ENCODE measurements at regions of chr5 and their contacts with region 1.

Region 1: DNA sequence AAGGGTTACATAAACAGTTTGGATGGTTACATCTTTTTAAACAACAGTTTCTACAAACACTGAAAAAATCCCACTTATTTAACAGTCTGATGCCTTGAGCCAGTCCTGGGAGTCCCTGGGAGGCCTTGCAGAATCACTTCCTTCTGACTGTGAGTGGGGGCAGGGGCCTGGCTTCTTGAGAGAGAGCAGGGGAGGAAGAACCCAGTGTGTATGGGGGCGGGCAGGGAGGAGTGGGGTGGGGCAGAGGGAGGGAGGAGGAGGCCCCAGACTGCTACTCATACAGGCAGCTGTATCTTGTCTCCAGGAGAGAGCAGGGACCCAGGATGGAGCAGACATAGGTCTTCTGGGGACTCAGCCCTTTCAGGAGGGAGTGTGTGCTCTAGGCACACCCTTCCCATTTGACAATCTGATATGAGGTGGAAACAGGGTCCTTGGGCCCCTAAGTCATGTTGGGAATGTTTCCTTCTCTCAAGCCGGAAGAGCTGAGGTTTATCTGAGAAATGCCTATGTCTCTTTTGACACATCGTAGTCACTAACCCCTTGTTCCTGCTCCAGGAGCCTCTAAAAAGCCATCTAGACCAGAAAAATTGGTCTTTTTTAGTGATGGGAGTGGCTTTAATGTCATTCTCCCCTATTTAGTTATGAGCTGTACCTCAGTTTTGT is 52.8 kb downstream of the IRF1 start:
- DNase-seq: peak; percentile 83
- H3K4me3 Mint-ChIP-seq: peak overlapping the region; percentile 46
- H3K27ac Mint-ChIP-seq: peak overlapping the region; percentile 81
- H3K4me1 Mint-ChIP-seq: peaks cover 83% of the 10 kb centered on the region
- H3K27me3 Mint-ChIP-seq: no peaks in the 10 kb centered on the region

Region 2: DNA sequence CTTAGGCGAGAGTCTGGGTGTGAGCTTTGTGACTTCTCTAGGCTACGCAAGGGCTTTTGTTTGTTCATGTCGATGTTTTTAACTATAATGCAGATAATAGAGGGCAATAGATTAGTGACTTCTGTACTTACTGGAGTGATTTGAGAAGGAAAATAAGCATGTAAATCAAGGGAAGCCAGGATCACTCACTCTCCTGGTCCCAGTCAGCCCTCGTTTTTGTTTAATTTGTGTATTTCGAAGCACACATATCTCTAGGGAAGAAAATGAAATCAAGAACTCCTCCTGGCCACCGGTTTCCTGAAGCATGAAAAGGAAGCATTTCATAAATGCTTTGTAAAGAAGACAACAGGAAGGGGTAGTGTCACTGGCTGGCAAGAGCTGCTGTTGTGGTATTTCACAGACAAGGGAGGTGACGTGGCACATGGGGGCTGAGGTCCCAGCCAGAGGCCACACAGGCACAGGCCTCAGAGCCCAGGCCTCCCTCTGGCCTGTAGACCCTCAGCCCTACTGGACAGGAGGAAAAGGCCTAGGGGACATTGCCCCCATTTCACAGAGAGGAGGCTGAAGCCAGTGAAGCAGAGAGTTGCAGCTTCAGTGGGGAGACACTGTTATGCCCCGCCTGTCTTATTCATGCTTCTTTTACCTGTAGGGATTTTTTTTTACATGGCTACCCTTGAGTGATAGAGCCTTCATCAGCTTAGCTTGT is 18.7 kb after region 1 on chr5:
- CTCF ChIA-PET with region 1: interaction called, 6 read pairs
- intact Hi-C with region 1: loop called (anchors 1 kb)
- DNase-seq: peak; percentile 66
- H3K4me3 Mint-ChIP-seq: peak overlapping the region; percentile 0
- H3K27ac Mint-ChIP-seq: peak overlapping the region; percentile 83
- H3K4me1 Mint-ChIP-seq: peaks cover 84% of the 10 kb centered on the region
- H3K27me3 Mint-ChIP-seq: no peaks in the 10 kb centered on the region

Measured in activated naive CD4-positive, alpha-beta T cell treated with anti-CD3 and anti-CD28 coated beads for 36 hours (primary cell).